Left colon (tissue), 2 donors: ENCODE measurements at regions of chr21 and their contacts with region 1.

Region 1: GRCh38 chr21:25708467-25709065 is 26.1 kb downstream of the ATP5PF start:
- DNase-seq: peak in 1 of 2 donors; percentile 20
- ATAC-seq: no peak

Region 2: DNA sequence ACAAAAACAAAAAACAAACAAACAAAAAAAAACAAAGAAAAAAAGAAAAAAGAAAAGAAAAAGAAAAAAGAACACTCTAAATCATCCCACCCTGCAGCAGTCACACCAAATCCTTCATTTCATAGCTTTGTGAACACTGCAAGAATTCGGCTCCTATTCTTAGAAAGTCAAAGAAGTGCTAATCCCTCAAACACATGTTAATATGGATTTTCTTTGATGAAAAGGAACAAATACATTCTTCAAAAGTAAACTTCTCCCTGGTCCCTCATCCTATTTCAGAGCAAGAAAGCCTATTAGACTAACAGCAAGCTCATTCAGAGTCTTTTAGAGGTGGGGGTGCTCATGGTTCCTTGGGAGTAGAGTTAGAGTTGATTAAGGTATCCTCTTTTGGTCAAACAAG is 94.1 kb before region 1 on chr21:
- intact Hi-C with region 1: loop called in 1 of 2 experiments (anchors 5 kb)
- DNase-seq: no peak
- ATAC-seq: no peak